Heart left ventricle (tissue), 16 donors: ENCODE measurements at regions of chr2 and their contacts with region 1.

Region 1: GRCh38 chr2:203112342-203112741 is 97.7 kb downstream of the NBEAL1 start:
- DNase-seq: no peak
- ATAC-seq: no peak
- H3K4me3 ChIP-seq: no peak overlapping the region
- H3K27ac ChIP-seq: no peak overlapping the region
- H3K4me1 ChIP-seq: no peaks in the 10 kb centered on the region
- H3K27me3 ChIP-seq: no peaks in the 10 kb centered on the region
- CTCF ChIP-seq: no peak
- POLR2A ChIP-seq: no peak

Region 2: GRCh38 chr2:203002054-203002821 is 110.1 kb before region 1 on chr2:
- intact Hi-C with region 1: loop called in 1 of 10 experiments (anchors 10 kb)
- DNase-seq: no peak
- ATAC-seq: no peak
- H3K4me3 ChIP-seq: no peak overlapping the region
- H3K27ac ChIP-seq: no peak overlapping the region
- H3K4me1 ChIP-seq: no peaks in the 10 kb centered on the region
- H3K27me3 ChIP-seq: no peaks in the 10 kb centered on the region
- CTCF ChIP-seq: no peak
- POLR2A ChIP-seq: no peak